Activated CD4-positive, alpha-beta T cell treated with anti-CD3 and anti-CD28 coated beads for 36 hours (primary cell): ENCODE measurements at regions of chr7 and their contacts with region 1.

Region 1: DNA sequence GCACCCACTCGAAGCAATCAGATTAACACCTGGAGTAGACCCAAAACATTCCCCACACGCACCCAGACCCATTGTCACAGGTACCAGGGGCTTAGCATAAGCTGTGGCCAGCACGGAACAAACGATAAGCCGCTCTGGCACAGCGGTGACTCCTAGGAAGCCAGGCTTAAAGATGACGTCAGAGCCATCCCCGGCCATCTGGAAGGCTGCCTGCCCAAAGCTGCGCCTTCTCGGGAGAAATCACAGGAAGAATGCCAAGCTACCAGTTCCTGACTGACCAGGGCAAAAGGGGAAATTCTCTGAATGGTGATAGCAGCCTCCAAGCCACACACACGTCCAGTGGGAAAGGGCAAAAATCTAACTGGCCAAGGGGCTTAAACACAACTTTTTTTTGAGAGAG is 13.0 kb upstream of the WIPI2 start:
- DNase-seq: no peak
- ATAC-seq: no peak
- H3K4me3 Mint-ChIP-seq: no peak overlapping the region
- H3K27ac Mint-ChIP-seq: no peak overlapping the region
- H3K4me1 Mint-ChIP-seq: no peaks in the 10 kb centered on the region
- H3K27me3 Mint-ChIP-seq: peaks cover 2% of the 10 kb centered on the region

Region 2: DNA sequence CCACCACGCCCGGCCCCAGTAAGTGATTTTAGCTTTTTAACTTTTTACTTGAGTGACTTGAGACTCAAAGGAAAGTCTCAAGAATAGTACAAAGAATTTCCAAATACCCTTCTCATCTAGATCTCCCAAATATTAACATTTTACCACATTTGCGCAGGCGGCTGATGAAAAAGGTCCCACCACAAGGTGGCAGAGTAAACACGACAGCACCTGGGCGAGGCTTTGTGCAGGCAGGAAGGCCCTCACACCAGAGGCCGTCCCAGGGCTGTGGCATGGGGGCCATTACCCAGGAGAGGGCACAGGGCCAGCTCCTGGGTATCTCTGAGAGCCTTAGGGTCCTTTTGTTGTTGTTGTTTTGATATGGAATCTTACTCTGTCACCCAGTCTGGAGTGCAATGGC is 37.1 kb before region 1 on chr7:
- CTCF ChIA-PET with region 1: interaction called, 4 read pairs
- POLR2A ChIA-PET with region 1: no interaction called
- intact Hi-C with region 1: loop called in 1 of 2 experiments (anchors 1 kb)
- DNase-seq: peak; percentile 60
- ATAC-seq: no peak
- H3K4me3 Mint-ChIP-seq: no peak overlapping the region
- H3K27ac Mint-ChIP-seq: no peak overlapping the region
- H3K4me1 Mint-ChIP-seq: peaks cover 15% of the 10 kb centered on the region
- H3K27me3 Mint-ChIP-seq: no peaks in the 10 kb centered on the region

Region 3: DNA sequence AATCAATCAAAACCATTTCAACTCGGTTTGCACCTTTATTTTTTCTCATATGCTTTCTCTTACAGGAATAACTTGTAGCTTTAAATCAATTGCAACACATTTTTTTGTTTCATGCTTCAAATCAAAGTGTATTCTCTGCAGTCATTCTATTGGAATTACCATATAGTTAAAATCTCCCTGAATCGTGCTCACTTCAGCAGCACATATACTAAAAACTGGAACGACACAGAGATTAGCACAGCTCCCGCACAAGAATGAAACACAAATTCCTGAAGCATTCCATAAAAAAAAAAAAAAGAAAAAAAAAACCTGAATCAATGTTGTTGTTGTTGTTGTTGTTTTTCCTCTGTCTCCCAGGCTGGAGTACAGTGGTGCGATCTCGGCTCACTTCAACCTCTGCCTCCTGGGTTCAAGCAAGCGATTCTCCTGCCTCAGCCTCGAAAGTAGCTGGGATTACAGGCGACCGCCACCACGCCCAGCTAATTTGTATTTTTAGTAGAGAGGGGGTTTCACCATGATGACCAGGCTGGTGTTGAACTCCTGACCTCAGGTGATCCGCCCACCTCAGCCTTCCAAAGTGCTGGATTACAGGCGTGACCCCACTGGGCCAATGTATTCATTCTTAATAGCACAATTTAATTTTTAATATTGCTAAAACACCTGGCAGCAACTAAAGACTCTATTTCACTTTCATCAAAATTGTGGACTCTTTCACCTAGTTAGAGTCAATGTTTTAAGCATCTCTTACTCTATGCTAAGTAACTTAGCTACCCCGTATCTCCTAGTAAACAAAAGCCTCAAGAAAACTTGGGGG is 880.5 kb after region 1 on chr7:
- CTCF ChIA-PET with region 1: no interaction called
- POLR2A ChIA-PET with region 1: no interaction called
- intact Hi-C with region 1: no loop called
- DNase-seq: no peak
- ATAC-seq: no peak
- H3K4me3 Mint-ChIP-seq: peak overlapping the region; percentile 86
- H3K27ac Mint-ChIP-seq: peak overlapping the region; percentile 96
- H3K4me1 Mint-ChIP-seq: peaks cover 21% of the 10 kb centered on the region
- H3K27me3 Mint-ChIP-seq: no peaks in the 10 kb centered on the region